Activated CD4-positive, alpha-beta T cell treated with anti-CD3 and anti-CD28 coated beads for 36 hours (primary cell): ENCODE measurements at regions of chrX and their contacts with region 1.

Region 1: GRCh38 chrX:153927922-153928760 is 2.1 kb upstream of the ARHGAP4 start:
- DNase-seq: peak; percentile 95
- ATAC-seq: peak; percentile 76
- H3K4me3 Mint-ChIP-seq: peak overlapping the region; percentile 91
- H3K27ac Mint-ChIP-seq: peak overlapping the region; percentile 97
- H3K4me1 Mint-ChIP-seq: peaks cover 29% of the 10 kb centered on the region
- H3K27me3 Mint-ChIP-seq: no peaks in the 10 kb centered on the region

Region 2: DNA sequence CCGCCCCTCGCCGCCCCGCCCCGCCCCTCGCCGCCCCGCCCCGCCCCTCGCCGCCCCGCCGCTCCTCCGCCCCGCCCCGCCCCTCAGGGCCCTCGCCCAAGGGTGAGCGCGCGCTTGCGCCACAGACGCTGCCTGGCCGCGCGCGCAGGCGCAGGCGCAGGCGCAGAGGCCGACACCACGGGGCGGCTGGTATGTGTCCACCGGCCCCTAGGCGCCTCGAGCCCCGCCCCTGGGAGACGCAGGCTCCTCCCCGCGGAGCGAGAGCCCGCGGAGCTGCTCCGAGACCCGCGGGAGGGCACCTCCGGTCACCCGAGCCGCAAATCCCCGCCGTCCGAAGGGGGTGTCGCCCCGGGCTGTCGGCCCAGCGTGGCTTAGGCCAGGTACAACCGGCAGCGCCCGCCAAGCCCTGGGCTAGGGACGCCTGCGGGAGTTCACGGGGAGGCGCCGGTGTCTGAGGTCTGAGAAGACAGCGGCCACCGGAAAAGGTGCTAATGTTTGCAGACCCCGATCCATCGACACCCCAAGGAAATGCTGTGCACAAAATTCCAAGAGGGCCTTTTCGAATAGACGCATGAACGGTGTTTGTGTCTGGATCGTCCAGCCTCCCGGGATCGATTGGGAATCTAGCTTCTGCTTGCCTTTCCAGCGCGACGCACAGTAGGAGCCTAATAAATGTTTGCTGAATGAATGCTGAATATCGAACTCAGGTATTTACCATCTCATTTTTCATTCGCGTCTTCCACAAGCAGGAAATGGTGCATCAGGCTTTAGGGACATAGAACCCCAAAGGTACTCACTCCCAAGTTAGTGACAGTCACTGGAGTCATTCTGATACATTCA is 328.7 kb before region 1 on chrX:
- CTCF ChIA-PET with region 1: no interaction called
- POLR2A ChIA-PET with region 1: no interaction called
- intact Hi-C with region 1: loop called in 1 of 2 experiments (anchors 1 kb)
- DNase-seq: peak; percentile 92
- ATAC-seq: peak; percentile 94
- H3K4me3 Mint-ChIP-seq: peak overlapping the region; percentile 81
- H3K27ac Mint-ChIP-seq: peak overlapping the region; percentile 72
- H3K4me1 Mint-ChIP-seq: peaks cover 35% of the 10 kb centered on the region
- H3K27me3 Mint-ChIP-seq: no peaks in the 10 kb centered on the region

Region 3: DNA sequence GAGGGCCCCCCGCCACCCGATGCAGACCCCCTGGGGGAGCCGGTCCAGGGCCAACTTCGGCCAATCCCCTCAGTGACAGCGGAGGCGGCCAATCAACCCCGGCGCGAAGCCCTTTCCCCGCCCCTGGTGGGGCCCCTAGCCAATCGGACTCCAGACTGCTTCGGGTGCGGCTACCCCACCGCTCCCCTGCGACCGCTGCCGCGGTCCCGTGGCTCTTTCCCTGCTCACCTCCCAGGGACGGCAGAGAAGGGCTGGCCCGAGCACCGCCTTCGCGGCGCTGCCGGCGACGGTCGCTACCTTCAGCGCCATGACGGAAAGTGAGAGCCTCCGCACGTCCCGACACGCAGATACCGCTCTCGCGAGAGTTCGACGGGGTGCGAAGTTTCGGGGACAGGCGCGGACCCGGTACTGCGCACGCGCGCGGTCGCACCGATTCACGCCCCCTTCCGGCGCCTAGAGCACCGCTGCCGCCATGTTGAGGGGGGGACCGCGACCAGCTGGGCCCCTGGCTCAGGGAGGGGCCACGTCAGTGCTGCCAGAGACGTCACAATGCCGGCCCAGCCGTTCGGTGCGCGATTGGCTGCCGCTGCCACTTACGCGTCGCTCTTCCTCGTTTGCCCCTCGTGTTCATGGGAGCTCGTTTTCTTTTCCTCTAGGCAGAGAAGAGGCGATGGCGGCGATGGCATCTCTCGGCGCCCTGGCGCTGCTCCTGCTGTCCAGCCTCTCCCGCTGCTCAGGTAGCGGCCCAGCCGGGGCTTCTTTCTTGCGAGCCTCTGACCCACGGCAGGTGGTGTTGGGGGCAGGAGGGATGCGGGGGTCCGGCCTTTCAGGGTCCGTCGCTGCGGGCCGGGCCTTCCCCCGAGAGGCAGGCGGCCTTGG is 133.9 kb before region 1 on chrX and contains the starts of genes IDH3G and SSR4:
- CTCF ChIA-PET with region 1: interaction called, 3 read pairs
- POLR2A ChIA-PET with region 1: interaction called, 11 read pairs
- intact Hi-C with region 1: loop called (anchors 1 to 5 kb)
- DNase-seq: peak; percentile 96
- ATAC-seq: peak; percentile 97
- H3K4me3 Mint-ChIP-seq: peak within 1 kb of the TSS; percentile 93
- H3K27ac Mint-ChIP-seq: peak within 1 kb of the TSS; percentile 93
- H3K4me1 Mint-ChIP-seq: peaks cover 21% of the 10 kb centered on the region
- H3K27me3 Mint-ChIP-seq: no peaks in the 10 kb centered on the region
- total RNA-seq, gene IDH3G: 48.8 to 62.4 TPM
- total RNA-seq, gene SSR4: 124 to 146 TPM

Region 4: GRCh38 chrX:153953342-153953830 is 25.2 kb after region 1 on chrX:
- CTCF ChIA-PET with region 1: interaction called, 5 read pairs
- POLR2A ChIA-PET with region 1: no interaction called
- intact Hi-C with region 1: loop called in 1 of 2 experiments (anchors 1 kb)
- DNase-seq: peak; percentile 87
- ATAC-seq: peak; percentile 76
- H3K4me3 Mint-ChIP-seq: no peak overlapping the region
- H3K27ac Mint-ChIP-seq: peak overlapping the region; percentile 70
- H3K4me1 Mint-ChIP-seq: peaks cover 10% of the 10 kb centered on the region
- H3K27me3 Mint-ChIP-seq: no peaks in the 10 kb centered on the region

Region 5: DNA sequence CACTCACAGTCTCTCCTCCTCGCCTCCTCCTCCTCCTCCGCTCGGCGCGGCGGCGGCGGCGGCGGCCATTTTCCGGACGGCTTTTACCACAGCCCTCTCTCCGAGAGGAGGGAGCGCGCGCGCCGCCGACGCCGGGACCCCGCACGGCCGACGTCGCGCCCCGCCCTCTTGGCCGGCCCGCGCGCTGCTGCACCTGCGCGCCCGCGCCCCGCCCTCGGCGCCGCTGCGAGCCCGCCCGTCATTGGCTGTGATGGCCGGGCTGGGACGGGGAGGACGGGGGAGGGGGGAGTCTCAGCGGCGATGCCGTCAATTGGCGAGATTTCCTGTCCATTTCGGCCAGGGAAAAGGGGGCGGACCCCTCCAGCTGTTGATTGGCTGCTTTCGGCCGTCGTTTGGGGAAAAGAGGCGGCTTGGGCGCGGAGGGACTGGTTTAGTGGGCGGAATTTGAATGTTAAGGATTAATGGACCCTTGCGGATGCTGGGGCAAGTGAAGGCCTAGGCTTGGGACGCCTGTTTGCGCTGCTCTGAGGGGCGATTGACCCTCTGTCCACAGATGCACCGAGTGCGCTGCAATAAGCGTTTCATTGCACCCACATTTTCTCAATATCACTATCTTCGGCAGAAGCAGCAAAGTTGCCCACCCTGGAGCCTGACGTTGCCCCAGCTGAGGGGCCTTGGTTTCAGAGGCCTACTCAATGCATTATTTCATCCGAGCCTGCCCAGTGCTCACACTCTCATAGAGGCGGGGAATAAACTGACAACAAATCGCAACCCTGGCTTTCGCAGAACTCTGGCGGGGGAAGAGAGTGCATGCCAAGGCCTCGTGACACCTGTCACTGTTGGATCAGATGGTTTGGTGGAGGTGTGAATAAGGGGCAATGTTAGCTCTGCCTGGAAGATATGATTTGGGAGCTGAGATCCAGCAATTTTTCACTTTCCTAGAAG is 169.7 kb after region 1 on chrX and contains the start of gene MECP2:
- CTCF ChIA-PET with region 1: no interaction called
- POLR2A ChIA-PET with region 1: no interaction called
- intact Hi-C with region 1: loop called in 1 of 2 experiments (anchors 2 kb)
- DNase-seq: peak; percentile 93
- ATAC-seq: peak; percentile 87
- H3K4me3 Mint-ChIP-seq: peak within 1 kb of the TSS; percentile 81
- H3K27ac Mint-ChIP-seq: peak within 1 kb of the TSS; percentile 96
- H3K4me1 Mint-ChIP-seq: peaks cover 56% of the 10 kb centered on the region
- H3K27me3 Mint-ChIP-seq: peaks cover 2% of the 10 kb centered on the region
- total RNA-seq, gene MECP2: 50.7 to 60.0 TPM

Region 6: GRCh38 chrX:154378782-154379591 is 450.8 kb after region 1 on chrX and contains the start of gene EMD:
- CTCF ChIA-PET with region 1: interaction called, 3 read pairs
- POLR2A ChIA-PET with region 1: no interaction called
- intact Hi-C with region 1: loop called in 1 of 2 experiments (anchors 10 kb)
- DNase-seq: peak; percentile 98
- ATAC-seq: peak; percentile 88
- H3K4me3 Mint-ChIP-seq: peak within 1 kb of the TSS; percentile 84
- H3K27ac Mint-ChIP-seq: peak within 1 kb of the TSS; percentile 91
- H3K4me1 Mint-ChIP-seq: peaks cover 23% of the 10 kb centered on the region
- H3K27me3 Mint-ChIP-seq: no peaks in the 10 kb centered on the region
- total RNA-seq, gene EMD: 75.9 to 89.4 TPM

Region 7: DNA sequence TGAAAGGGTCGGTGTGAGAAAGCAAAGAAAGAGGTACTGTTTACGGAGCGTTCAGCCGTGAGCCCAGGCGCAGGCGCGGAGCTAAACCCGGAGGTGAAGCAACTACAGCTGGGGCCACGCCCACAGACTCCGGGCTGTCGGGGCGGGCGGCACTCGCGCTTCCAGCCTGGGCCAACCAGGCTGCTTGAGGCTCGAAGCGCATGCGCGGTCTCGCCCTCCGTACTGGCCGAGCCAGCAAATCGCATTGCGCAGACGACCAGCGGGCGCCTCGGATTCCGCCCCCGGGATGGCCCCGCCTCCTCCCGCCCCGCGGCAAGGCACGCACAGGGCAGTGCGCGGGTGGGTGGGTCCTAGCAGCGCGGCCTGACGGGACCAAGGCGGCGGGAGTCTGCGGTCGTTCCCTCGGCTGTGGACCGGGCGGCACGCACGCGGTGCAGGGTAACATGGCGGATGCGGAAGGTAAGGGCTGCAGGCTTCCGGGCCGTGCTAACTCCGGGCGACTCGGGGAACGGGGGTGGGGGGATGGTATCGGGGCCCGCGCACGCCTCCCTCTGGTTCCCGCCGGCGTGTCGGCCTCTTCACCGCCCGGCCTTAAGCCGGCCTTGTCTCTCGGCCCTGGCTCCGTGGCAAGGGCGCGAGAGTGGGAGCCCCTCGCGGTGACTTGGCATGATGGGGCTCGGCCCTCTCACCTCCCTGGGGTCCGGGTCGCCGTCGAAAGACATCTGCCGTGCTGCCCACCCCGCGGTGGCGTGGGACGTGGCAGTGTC is 834.6 kb after region 1 on chrX and contains the start of gene DKC1:
- CTCF ChIA-PET with region 1: no interaction called
- POLR2A ChIA-PET with region 1: no interaction called
- intact Hi-C with region 1: loop called in 1 of 2 experiments (anchors 2 kb)
- DNase-seq: peak; percentile 97
- ATAC-seq: peak; percentile 90
- H3K4me3 Mint-ChIP-seq: peak within 1 kb of the TSS; percentile 85
- H3K27ac Mint-ChIP-seq: peak within 1 kb of the TSS; percentile 92
- H3K4me1 Mint-ChIP-seq: peaks cover 33% of the 10 kb centered on the region
- H3K27me3 Mint-ChIP-seq: no peaks in the 10 kb centered on the region
- total RNA-seq, gene DKC1: 126 to 130 TPM

Region 8: GRCh38 chrX:155027509-155028066 is 1099.4 kb after region 1 on chrX:
- CTCF ChIA-PET with region 1: no interaction called
- POLR2A ChIA-PET with region 1: no interaction called
- intact Hi-C with region 1: no loop called
- DNase-seq: peak; percentile 22
- ATAC-seq: peak; percentile 47
- H3K4me3 Mint-ChIP-seq: peak overlapping the region; percentile 86
- H3K27ac Mint-ChIP-seq: peak overlapping the region; percentile 93
- H3K4me1 Mint-ChIP-seq: peaks cover 21% of the 10 kb centered on the region
- H3K27me3 Mint-ChIP-seq: no peaks in the 10 kb centered on the region